Dendritic cell treated with granulocyte-macrophage colony-stimulating factor and Interleukin-4, amounts not matched to agents 40 ng/mL and 50 ng/mL, for 4 days (primary cell): ENCODE measurements at regions of chr11 and their contacts with region 1.

Region 1: DNA sequence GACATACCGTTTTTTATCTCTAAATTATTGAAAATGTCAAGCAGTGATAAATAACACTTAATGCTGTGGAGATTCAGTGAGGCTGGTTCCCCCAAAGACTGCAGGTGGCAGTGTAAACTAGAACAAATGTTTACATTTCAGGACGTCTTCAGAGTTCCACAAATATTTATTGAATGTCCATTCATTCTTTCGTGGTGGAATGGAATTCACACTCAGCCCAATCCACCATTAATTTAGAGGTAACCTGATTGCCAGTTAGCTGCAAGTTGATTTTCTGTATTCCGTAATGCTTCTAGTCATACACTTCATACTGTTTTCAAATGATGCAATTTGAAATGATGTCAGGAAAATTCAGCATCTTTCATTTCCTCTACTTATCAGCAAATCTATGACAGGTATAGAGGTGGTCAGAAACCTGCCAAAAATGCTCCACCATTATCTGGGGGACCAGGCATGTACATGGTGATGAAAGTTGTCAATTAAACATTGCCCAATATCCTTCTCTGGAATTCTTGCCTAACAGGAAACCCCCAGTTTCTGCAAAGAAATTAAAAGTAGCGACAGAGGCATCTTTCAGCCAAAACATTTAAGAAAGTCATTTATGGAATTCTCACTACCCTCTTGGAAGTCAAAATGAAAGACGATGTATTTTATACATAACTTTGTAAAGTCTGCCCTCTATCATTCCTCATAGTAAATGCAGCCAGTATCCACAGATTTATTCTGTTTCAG is 94.3 kb upstream of the BMAL1 start:
- H3K4me3 Mint-ChIP-seq: no peak overlapping the region
- H3K27ac Mint-ChIP-seq: no peak overlapping the region
- H3K4me1 Mint-ChIP-seq: peaks cover 11% of the 10 kb centered on the region
- H3K27me3 Mint-ChIP-seq: peaks cover 1% of the 10 kb centered on the region

Region 2: GRCh38 chr11:12963792-12964536 is 219.3 kb before region 1 on chr11:
- intact Hi-C with region 1: loop called (anchors 10 kb)
- H3K4me3 Mint-ChIP-seq: no peak overlapping the region
- H3K27ac Mint-ChIP-seq: no peak overlapping the region
- H3K4me1 Mint-ChIP-seq: no peaks in the 10 kb centered on the region
- H3K27me3 Mint-ChIP-seq: no peaks in the 10 kb centered on the region

Region 3: GRCh38 chr11:13073119-13073981 is 109.9 kb before region 1 on chr11:
- intact Hi-C with region 1: no loop called
- H3K4me3 Mint-ChIP-seq: no peak overlapping the region
- H3K27ac Mint-ChIP-seq: no peak overlapping the region
- H3K4me1 Mint-ChIP-seq: no peaks in the 10 kb centered on the region
- H3K27me3 Mint-ChIP-seq: no peaks in the 10 kb centered on the region

Region 4: DNA sequence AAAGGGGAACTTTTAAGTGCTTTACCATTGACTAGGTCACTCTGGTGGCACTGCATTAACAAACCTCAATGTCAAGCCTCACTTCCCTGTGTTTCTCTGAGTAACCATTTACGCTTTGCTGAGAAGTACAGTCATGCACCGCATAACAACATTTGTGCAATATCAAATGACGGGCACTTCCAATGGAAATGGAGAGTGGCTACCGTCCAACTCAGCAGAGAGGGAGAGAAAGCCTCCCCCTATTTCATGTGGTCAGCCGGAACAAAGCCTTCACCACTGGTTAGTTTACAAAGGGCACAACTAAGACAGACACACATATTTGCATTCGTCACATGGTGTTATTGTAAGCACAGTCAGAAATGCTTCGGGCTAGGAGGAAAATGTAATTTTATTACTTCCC is 56.8 kb before region 1 on chr11:
- intact Hi-C with region 1: no loop called
- H3K4me3 Mint-ChIP-seq: no peak overlapping the region
- H3K27ac Mint-ChIP-seq: no peak overlapping the region
- H3K4me1 Mint-ChIP-seq: no peaks in the 10 kb centered on the region
- H3K27me3 Mint-ChIP-seq: peaks cover 16% of the 10 kb centered on the region

Region 5: DNA sequence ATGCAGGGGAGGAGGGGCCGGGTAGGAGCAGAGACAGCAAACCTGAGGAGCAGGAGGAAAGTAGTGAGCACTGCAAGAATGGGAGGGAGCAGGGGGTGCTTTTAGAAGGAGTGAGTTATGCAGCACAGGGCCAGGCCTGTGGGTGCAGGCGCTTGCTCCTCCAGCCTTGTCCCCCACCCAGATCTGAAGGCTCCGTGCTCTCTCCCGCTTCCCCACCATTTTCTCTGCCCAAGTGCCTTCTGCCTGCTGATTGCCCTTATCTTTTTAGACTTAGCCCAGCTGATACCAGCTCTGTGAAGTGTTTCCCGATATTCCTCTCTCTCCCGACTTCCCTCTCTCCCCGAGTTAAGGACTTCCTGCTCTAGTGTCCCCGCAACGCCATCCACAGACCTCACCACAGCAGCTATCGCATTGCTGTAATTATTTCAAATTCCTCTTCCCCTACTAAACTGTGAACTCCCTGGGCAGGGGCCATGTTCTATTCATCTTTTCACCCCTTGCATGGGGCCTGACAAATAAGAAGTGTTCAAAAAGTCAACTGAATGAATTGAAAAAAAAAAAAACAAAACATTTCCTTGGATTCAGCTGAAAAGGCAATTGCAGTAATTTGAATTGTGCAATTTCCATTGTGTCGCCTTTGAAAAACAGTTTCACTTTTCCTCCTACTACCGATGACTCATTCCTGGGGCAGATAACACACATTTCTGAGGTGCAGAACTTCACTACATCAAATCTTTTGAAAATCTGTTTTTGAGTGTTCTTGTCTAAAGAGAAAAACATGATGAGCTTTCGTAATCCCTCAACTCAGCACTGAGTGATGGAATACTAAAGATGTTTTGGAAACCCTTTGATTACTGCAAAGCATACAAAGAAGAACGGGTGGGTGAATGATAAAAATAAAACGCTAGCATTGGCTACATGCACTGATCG is 24.7 kb after region 1 on chr11:
- intact Hi-C with region 1: no loop called
- H3K4me3 Mint-ChIP-seq: peak overlapping the region; percentile 72
- H3K27ac Mint-ChIP-seq: peak overlapping the region; percentile 85
- H3K4me1 Mint-ChIP-seq: peaks cover 54% of the 10 kb centered on the region
- H3K27me3 Mint-ChIP-seq: no peaks in the 10 kb centered on the region

Region 6: GRCh38 chr11:13238879-13239514 is 55.7 kb after region 1 on chr11:
- intact Hi-C with region 1: loop called (anchors 1 kb)
- H3K4me3 Mint-ChIP-seq: peak overlapping the region; percentile 32
- H3K27ac Mint-ChIP-seq: no peak overlapping the region
- H3K4me1 Mint-ChIP-seq: peaks cover 19% of the 10 kb centered on the region
- H3K27me3 Mint-ChIP-seq: peaks cover 12% of the 10 kb centered on the region

Region 7: GRCh38 chr11:13335319-13335718 is 152.1 kb after region 1 on chr11:
- intact Hi-C with region 1: loop called (anchors 2 kb)
- H3K4me3 Mint-ChIP-seq: no peak overlapping the region
- H3K27ac Mint-ChIP-seq: no peak overlapping the region
- H3K4me1 Mint-ChIP-seq: peaks cover 70% of the 10 kb centered on the region
- H3K27me3 Mint-ChIP-seq: no peaks in the 10 kb centered on the region

Region 8: DNA sequence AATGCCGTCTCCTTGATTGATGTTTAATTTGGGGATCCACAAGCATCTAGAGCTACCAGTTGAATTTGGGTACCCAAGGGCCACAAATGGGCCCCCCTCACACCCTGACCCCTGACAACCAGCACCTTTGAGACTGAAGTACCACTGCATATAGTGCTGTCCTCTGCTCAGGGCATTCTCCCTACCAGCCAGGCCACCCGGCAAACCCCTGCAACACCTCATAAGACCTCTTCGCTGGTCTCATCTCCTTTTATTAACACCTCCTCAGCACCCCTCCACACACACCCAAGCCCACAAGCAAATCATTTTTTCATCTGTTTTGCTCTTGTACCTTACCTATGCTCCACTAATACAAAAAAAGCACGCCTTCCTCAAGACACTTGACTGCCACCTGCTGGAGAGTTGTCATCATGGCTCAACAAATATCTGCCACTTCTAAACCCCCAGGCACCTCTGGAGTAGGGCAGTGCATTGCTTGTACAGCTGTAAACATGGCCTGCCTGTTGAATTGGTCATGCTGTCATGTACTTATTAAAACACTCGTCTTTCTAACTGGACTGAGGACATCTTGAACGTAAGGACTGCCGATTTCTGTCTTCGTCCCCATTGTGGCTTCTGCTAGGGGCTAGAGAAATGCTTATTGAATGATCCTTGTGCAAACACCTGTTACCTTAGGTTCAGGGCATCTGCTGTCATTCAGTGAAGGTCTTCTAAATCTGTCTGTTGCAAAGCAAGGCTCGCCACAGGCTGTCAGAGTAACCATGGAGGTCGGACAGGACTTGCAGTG is 160.9 kb after region 1 on chr11:
- intact Hi-C with region 1: loop called (anchors 2 kb)
- H3K4me3 Mint-ChIP-seq: no peak overlapping the region
- H3K27ac Mint-ChIP-seq: no peak overlapping the region
- H3K4me1 Mint-ChIP-seq: peaks cover 68% of the 10 kb centered on the region
- H3K27me3 Mint-ChIP-seq: no peaks in the 10 kb centered on the region

Region 9: GRCh38 chr11:13462901-13463778 is 279.9 kb after region 1 on chr11 and contains the start of gene BTBD10:
- intact Hi-C with region 1: loop called (anchors 10 kb)
- H3K4me3 Mint-ChIP-seq: peak within 1 kb of the TSS; percentile 99
- H3K27ac Mint-ChIP-seq: peak within 1 kb of the TSS; percentile 100
- H3K4me1 Mint-ChIP-seq: peaks cover 35% of the 10 kb centered on the region
- H3K27me3 Mint-ChIP-seq: no peaks in the 10 kb centered on the region